Vagina (tissue), 2 donors: ENCODE measurements at regions of chr17 and their contacts with region 1.

Region 1: DNA sequence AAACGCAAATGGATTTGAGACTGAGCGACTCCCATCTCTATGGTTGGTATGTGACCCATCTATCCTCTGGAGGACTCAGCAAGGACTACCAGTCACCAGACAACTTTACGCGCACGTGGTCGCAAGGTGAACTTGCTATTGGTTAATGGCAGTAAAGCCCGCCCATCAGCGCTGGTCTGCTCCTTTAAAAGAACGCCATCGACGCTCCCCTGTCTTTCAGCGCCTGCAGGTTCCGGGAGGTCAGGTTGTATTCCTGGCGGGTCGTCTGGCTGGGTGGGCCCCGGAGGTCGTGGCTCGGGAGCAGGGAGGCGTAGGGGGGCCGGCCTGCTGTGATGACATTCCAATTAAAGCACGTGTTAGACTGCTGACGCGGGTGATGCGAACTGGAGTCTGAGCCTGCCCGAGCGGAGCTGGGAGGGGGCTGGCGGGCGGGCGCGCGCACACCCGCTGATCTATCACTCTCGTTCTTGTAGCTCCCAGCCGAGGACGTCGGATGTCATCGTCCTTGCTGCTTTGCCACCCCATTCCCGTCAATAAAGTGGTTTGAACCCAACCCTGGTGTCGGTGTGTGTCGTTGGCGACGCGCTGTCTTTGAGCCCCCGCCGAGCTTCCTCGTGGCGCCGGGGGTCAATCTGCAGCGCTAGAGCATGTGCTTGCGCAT is 15.9 kb upstream of the ERN1 start:
- DNase-seq: peak in 1 of 2 donors; percentile 100
- H3K4me3 ChIP-seq: peak overlapping the region; percentile 84 to 85
- H3K27ac ChIP-seq: peak overlapping the region; percentile 98
- H3K4me1 ChIP-seq: peaks cover 27% of the 10 kb centered on the region
- H3K27me3 ChIP-seq: no peaks in the 10 kb centered on the region
- CTCF ChIP-seq: no peak
- POLR2A ChIP-seq: peak in 1 of 2 donors; percentile 97

Region 2: GRCh38 chr17:64174686-64175456 is 29.0 kb after region 1 on chr17:
- intact Hi-C with region 1: no loop called
- DNase-seq: peak in 1 of 2 donors; percentile 81
- H3K4me3 ChIP-seq: no peak overlapping the region
- H3K27ac ChIP-seq: no peak overlapping the region
- H3K4me1 ChIP-seq: peaks cover 10% of the 10 kb centered on the region
- H3K27me3 ChIP-seq: no peaks in the 10 kb centered on the region
- CTCF ChIP-seq: no peak
- POLR2A ChIP-seq: no peak

Region 3: GRCh38 chr17:64262417-64263260 is 116.8 kb after region 1 on chr17 and contains the start of gene TEX2:
- intact Hi-C with region 1: loop called (anchors 5 kb)
- DNase-seq: no peak
- H3K4me3 ChIP-seq: peak within 1 kb of the TSS; percentile 74 to 98
- H3K27ac ChIP-seq: peak within 1 kb of the TSS; percentile 95
- H3K4me1 ChIP-seq: peaks cover 42% of the 10 kb centered on the region
- H3K27me3 ChIP-seq: no peaks in the 10 kb centered on the region
- CTCF ChIP-seq: no peak
- POLR2A ChIP-seq: peak in 1 of 2 donors; percentile 72
- total RNA-seq, gene TEX2: 32.4 TPM

Region 4: GRCh38 chr17:64277831-64278562 is 132.1 kb after region 1 on chr17:
- intact Hi-C with region 1: loop called (anchors 1 kb)
- DNase-seq: no peak
- H3K4me3 ChIP-seq: no peak overlapping the region
- H3K27ac ChIP-seq: peak overlapping the region; percentile 46
- H3K4me1 ChIP-seq: peaks cover 13% of the 10 kb centered on the region
- H3K27me3 ChIP-seq: no peaks in the 10 kb centered on the region
- CTCF ChIP-seq: no peak
- POLR2A ChIP-seq: no peak